H1 (cell line): ENCODE measurements at regions of chr16 and their contacts with region 1.

Region 1: DNA sequence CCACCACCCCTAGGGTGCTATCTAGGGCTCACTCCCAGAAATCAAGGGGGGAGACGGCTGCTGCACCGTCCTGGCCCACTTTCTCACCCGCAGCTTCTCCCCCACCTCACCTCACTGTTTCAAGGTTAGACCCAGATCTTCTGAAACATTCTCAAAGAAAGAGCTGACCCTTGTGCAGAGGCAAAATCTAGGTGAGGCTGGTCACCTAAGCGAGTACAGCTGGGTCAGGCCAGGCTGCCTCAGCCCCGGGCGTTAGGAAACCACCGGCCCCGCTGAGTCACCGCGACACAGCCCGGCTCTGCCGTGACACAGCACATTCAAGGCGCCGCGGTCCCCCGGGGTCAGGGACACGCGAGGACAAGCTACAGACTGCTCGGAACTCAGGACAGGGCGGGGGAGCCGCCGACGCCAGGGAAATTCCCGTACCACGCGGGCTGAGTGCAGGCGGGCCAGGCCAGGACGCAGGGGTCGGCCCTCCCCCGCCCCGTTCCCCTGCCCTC is 27.1 kb downstream of the GNPTG start:
- DNase-seq: no peak
- H3K4me3 ChIP-seq: peak overlapping the region; percentile 63 to 73 (median 70)
- H3K27ac ChIP-seq: peak overlapping the region; percentile 86; the same call in 1 of the 2 replicates
- H3K4me1 ChIP-seq: peaks cover 0 to 16% (median 10%) of the 10 kb centered on the region in 4 experiments; a peak in 5 of 7 replicates
- H3K27me3 ChIP-seq: no peaks in the 10 kb centered on the region
- CTCF ChIP-seq: no peak
- EP300 ChIP-seq: no peak
- POLR2A ChIP-seq: no peak
- RAD21 ChIP-seq: no peak

Region 2: GRCh38 chr16:1287664-1288551 is 90.9 kb before region 1 on chr16:
- CTCF ChIA-PET with region 1: no interaction called
- POLR2A ChIA-PET with region 1: no interaction called
- DNase-seq: no peak
- H3K4me3 ChIP-seq: no peak overlapping the region
- H3K27ac ChIP-seq: no peak overlapping the region
- H3K4me1 ChIP-seq: peaks cover 3 to 30% (median 19%) of the 10 kb centered on the region in 4 experiments; a peak in 6 of 7 replicates
- H3K27me3 ChIP-seq: peaks cover 7 to 39% (median 26%) of the 10 kb centered on the region in 4 experiments
- CTCF ChIP-seq: no peak
- EP300 ChIP-seq: no peak
- POLR2A ChIP-seq: no peak
- RAD21 ChIP-seq: no peak

Region 3: DNA sequence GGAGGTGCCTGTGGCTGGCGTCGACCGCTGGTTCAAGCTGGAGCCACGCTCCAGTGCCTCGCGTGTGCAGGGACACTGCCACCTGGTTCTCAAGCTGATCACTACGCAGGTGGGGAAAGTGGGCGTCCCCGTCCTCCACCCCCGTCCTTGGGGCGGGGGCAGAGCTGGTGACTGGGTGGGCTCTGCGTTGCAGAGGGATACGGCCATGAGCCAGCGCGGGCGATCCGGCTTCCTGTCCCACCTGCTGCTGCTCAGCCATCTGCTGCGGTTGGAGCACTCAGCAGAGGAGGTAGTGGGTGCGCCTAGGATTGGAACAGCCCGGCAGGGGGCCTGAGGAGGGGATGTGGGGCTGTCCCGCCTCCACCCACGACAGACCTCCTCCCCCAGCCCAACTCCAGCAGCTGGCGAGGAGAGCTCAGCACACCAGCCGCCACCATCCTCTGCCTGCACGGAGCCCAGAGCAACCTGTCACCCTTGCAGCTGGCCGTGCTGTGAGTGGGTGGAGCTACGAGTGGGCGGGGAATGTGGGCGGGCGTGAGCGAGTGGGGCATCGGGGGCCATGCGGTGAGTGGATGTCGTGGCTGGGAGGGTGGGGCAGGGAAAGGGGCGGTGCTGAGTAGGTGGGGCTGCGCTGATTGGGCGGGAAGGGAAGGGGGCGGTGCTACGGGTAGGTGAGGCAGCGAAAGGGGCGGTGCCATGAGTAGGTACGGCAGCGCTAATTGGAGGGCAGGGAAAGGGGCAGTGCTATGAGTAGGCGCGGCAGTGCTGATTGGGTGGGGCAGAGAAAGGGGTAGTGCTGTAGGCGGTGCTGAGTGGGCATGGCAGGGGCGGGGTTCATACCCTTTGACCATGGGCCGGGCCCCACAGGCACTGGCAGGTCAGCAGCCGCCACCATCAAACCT is 36.1 kb before region 1 on chr16:
- CTCF ChIA-PET with region 1: interaction called, 4 read pairs
- POLR2A ChIA-PET with region 1: interaction called, 19 read pairs
- DNase-seq: peak; percentile 96 to 97
- H3K4me3 ChIP-seq: peak overlapping the region; percentile 32 to 59 (median 41); a peak in 7 of 8 replicates
- H3K27ac ChIP-seq: no peak overlapping the region
- H3K4me1 ChIP-seq: peaks cover 0 to 12% (median 3%) of the 10 kb centered on the region in 4 experiments; a peak in 4 of 7 replicates
- H3K27me3 ChIP-seq: peaks cover 0 to 8% (median 0%) of the 10 kb centered on the region in 4 experiments; a peak in 3 of 7 replicates
- CTCF ChIP-seq: no peak
- EP300 ChIP-seq: no peak
- POLR2A ChIP-seq: no peak
- RAD21 ChIP-seq: no peak

Region 4: DNA sequence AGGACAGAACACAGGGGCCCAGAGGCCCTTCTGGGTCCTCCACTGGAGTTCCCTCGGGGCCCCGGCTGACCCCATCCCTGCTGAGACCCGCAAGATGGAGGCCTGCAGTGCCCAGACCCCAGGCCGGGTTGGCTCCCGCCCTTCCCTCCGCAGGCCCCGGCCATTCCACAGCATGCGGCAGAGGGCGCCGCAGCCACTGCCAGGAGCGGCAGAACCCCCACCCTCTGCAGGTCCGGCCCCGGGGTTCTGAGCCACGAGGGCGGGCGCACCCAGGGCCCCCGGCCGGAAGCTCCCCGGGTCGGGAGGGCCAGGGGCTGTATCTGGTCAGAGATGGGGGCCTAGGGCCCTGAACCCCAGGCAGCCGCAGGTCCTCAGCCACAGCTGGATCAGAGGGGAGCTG is 49.7 kb after region 1 on chr16:
- CTCF ChIA-PET with region 1: interaction called, 12 read pairs
- POLR2A ChIA-PET with region 1: no interaction called
- DNase-seq: peak in 1 of 2 experiments; percentile 85
- H3K4me3 ChIP-seq: no peak overlapping the region
- H3K27ac ChIP-seq: no peak overlapping the region
- H3K4me1 ChIP-seq: no peaks in the 10 kb centered on the region; a peak in 2 of 7 replicates
- H3K27me3 ChIP-seq: no peaks in the 10 kb centered on the region
- CTCF ChIP-seq: peak; percentile 53 to 66 (median 60)
- EP300 ChIP-seq: no peak
- POLR2A ChIP-seq: no peak
- RAD21 ChIP-seq: peak; percentile 48 to 66